ENCODE measurements at regions of chr6 and their contacts with region 1.

Region 1: DNA sequence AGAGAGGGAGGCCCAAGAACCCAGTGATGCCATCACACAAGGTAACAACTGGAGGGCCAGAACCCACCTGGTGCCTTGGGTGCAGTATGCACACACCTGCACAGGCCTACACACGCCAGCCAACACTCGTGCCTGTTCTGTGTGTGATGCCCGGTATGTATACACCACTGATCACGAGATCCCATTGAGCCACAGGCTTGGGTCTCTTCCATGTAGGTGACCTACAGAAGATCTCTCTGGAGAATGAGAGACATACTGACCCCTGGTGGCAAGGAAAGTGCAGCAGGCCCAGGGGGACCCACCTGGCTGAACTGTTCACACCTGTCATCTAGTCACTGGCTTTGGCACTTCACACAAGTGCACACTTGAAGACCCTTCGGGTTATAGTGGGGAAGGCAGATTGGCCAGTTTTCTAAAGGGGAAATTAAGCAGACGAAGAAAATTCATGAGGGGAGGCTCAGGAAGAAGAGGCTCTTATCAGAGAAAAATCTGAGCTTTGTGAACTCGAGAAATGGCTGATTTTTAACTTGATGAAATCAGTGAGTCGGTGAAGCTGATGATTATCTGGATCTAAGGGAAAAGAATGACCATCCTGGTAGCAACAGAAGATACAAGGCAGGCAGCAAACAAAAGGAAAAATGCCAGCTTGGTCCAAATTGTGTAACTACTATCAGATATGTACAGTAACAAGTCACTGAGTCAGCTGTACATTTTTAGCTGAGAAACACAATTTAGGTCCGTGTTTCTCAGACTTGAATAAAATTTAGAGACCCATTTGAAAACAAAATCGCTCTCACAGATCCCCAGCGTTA is 69.1 kb upstream of the PBOV1 start:
- DNase-seq: no peak
- ATAC-seq: peak; percentile 90
- H3K4me3 ChIP-seq: no peak overlapping the region
- H3K27ac ChIP-seq: no peak overlapping the region
- H3K4me1 ChIP-seq: no peaks in the 10 kb centered on the region
- H3K27me3 ChIP-seq: no peaks in the 10 kb centered on the region
- CTCF ChIP-seq: peak; percentile 60 to 86 (median 81)
- EP300 ChIP-seq: no peak
- POLR2A ChIP-seq: no peak
- RAD21 ChIP-seq: peak; percentile 49

Region 2: GRCh38 chr6:138063726-138064125 is 223.6 kb before region 1 on chr6:
- CTCF ChIA-PET with region 1: no interaction called
- POLR2A ChIA-PET with region 1: no interaction called
- RAD21 ChIA-PET with region 1: no interaction called
- SMC1A ChIA-PET with region 1: no interaction called
- in situ Hi-C with region 1: no loop called
- intact Hi-C with region 1: no loop called
- DNase-seq: no peak
- ATAC-seq: no peak
- H3K4me3 ChIP-seq: no peak overlapping the region
- H3K27ac ChIP-seq: no peak overlapping the region
- H3K4me1 ChIP-seq: no peaks in the 10 kb centered on the region
- H3K27me3 ChIP-seq: no peaks in the 10 kb centered on the region
- CTCF ChIP-seq: no peak
- EP300 ChIP-seq: no peak
- POLR2A ChIP-seq: no peak
- RAD21 ChIP-seq: no peak

Region 3: DNA sequence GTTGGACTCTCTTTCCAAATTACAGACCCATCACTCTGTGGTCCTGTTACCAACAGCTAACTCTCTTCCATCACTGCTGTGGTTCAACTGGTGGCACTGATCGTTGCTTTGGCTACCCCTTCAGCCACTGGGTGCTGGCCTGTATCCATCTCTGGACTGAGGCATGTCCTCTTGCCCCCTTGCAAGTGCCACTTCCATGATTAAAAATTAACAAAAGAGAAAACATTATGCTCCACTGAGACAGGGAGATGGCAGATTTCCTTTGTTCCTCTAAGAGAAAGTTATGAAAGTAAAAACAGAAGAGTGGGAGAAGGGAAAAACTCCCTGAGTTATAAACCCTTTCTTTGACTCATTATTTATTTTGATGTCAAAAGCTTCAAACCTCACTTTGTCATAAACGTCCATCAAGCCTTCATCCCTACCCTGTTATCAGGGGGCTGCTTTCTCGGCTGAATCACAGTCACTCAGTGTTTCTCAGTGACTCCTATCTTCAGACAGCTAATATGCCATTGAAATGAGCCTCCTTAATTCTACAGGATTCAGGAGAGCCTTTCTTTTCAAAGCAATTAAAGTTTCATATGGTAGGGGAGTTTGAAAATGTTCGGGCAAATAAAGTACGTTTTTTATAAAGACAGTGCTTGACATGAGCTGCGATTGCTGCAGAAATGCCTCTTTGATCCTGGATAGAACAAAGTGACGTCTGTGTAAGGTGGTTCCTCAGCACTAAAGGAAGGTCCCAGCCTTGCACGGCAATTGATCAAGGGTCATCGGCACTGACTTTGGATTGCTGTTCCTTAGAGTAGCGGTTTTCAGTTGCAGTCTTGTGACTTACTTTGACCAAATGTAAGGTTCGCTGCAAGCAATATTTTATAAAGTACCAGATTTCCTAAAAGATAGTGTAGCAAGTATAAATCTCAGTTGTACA is 19.1 kb before region 1 on chr6:
- CTCF ChIA-PET with region 1: no interaction called
- POLR2A ChIA-PET with region 1: no interaction called
- RAD21 ChIA-PET with region 1: no interaction called
- SMC1A ChIA-PET with region 1: no interaction called
- in situ Hi-C with region 1: no loop called
- intact Hi-C with region 1: no loop called
- DNase-seq: no peak
- ATAC-seq: no peak
- H3K4me3 ChIP-seq: no peak overlapping the region
- H3K27ac ChIP-seq: no peak overlapping the region
- H3K4me1 ChIP-seq: no peaks in the 10 kb centered on the region
- H3K27me3 ChIP-seq: no peaks in the 10 kb centered on the region; a peak in 1 of 4 replicates
- CTCF ChIP-seq: no peak
- EP300 ChIP-seq: no peak
- POLR2A ChIP-seq: no peak
- RAD21 ChIP-seq: no peak

Region 4: DNA sequence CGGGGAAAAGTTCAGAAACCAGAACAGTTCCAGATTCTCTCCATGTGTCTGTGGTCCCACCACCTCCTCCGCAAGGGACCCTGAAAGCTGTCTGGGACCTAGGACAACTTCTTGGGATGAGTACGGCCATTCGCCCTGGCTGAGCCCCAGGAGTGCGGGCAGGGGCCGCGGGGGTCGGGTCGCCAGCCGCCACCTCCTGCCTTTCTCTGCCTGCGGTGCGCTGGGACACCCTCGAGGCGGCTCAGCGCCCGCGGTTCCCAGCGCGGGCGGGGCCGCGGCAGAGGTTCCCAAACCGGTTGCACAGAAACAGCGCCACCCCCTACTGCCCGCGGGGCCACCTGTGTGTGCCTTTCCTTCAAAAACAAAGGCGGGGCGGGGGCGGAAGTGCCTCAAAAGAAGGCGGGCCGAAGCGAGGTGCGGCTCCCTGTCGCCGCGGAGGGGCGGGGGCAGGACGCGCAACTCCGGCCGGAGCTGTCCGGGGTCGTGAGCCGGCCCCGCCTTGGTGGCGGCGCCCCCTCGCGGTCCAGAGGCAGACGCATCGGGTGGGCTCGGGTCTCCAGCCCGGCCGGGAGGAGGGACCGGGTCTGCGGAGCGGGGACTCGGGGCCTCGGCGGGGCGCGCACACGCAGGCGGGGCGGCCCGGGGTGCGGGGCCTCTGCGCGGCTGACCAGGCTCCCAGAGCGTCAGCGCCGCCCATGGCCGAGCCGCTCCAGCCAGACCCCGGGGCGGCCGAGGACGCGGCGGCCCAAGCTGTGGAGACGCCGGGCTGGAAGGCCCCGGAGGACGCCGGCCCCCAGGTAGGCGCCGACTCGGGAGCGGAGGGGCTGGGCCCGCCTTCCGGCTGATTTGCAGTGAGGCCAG is 116.7 kb after region 1 on chr6 and contains the start of gene HEBP2:
- CTCF ChIA-PET with region 1: interaction called, 4 read pairs
- POLR2A ChIA-PET with region 1: no interaction called
- RAD21 ChIA-PET with region 1: no interaction called
- SMC1A ChIA-PET with region 1: no interaction called
- in situ Hi-C with region 1: no loop called
- intact Hi-C with region 1: loop called (anchors 5 kb)
- DNase-seq: peak; percentile 65
- ATAC-seq: peak; percentile 91
- H3K4me3 ChIP-seq: peak within 1 kb of the TSS; percentile 87
- H3K27ac ChIP-seq: peak within 1 kb of the TSS; percentile 61
- H3K4me1 ChIP-seq: peaks cover 3% of the 10 kb centered on the region; the same call in 1 of the 2 replicates
- H3K27me3 ChIP-seq: no peaks in the 10 kb centered on the region
- CTCF ChIP-seq: peak; percentile 39 to 44 (median 40); a peak in 5 of 6 replicates
- EP300 ChIP-seq: no peak
- POLR2A ChIP-seq: peak; percentile 78
- RAD21 ChIP-seq: peak; percentile 34; the same call in 1 of the 2 replicates
- polyA plus RNA-seq, gene HEBP2: 3.8 to 17.2 TPM

Measured in GM12878 (cell line).